ENCODE measurements at regions of chr6 and their contacts with region 1.

Region 1: DNA sequence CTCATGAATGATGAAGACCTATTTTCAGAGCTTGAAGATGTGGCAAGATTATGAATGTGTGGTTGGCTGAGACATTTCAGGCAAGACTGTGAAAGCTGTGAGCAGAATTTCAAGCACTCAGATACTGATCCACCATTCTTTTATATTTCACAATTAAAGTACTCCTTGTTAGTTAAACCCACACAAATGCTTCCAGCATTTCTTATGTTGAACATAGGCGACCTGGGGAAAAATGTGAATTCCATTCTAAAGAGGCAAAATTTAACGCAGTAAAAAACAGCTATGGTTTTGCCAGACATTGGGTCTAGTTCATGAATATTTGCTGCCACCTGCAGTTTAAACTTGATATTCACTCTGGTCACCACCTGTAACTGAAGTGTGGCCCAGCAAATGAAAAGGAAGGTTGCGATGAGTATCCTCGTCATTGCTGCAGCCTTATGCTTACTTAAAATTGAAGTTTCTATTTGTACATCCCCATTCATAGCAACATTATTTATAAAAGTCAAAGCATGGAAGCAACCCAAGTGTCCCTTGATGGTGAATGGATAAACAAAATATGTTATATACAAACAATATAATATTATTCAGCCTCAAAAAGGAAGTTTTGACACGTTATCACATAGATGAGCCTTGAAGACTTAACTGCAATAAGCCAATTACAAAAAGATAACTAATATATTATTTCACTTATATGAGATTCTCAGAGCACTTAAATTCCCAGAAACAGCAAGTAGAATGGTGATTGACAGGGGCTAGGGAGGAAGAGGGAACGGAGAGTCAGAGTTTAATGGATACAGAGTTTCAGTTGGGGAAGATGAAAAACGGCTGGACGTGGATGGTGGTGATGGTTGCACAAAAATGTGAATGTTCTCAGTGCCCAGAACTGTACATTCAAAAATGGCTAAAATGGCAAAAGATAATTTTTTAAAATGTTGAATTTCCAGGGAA is 32.4 kb upstream of the FAM184A start:
- DNase-seq: peak in 1 of 5 donors; percentile 16
- ATAC-seq: peak; percentile 52 to 80 (median 63)
- H3K4me3 ChIP-seq: no peak overlapping the region
- H3K27ac ChIP-seq: no peak overlapping the region
- H3K4me1 ChIP-seq: peaks cover 0 to 6% (median 0%) of the 10 kb centered on the region in 12 donors
- H3K27me3 ChIP-seq: no peaks in the 10 kb centered on the region
- CTCF ChIP-seq: peak; percentile 34 to 78 (median 68)
- POLR2A ChIP-seq: no peak

Region 2: DNA sequence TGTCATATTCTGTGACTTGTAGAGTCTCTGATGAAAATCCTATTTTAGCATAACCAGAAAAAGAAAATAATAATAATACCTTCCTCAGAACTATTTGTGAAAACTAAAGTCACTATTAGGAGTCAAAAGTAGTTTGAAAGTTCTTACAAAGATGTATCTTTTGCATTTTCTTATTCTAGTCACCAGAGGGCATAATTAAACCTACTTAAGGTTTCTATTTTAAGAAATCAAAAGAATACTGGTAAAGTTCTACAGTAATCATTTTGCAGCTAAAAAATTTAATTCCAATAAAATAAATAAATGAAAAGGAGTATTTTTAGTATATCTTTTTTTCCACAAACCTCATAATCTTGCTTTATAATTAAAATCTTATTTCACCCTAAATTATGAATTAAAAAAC is 147.9 kb before region 1 on chr6:
- intact Hi-C with region 1: loop called (anchors 1 to 5 kb)
- DNase-seq: no peak
- ATAC-seq: no peak
- H3K4me3 ChIP-seq: no peak overlapping the region
- H3K27ac ChIP-seq: no peak overlapping the region
- H3K4me1 ChIP-seq: no peaks in the 10 kb centered on the region
- H3K27me3 ChIP-seq: no peaks in the 10 kb centered on the region
- CTCF ChIP-seq: peak in 9 of 12 donors; percentile 9 to 50 (median 39)
- POLR2A ChIP-seq: no peak

Region 3: GRCh38 chr6:118968416-118968815 is 142.5 kb before region 1 on chr6:
- intact Hi-C with region 1: loop called (anchors 1 to 5 kb)
- DNase-seq: no peak
- ATAC-seq: no peak
- H3K4me3 ChIP-seq: no peak overlapping the region
- H3K27ac ChIP-seq: no peak overlapping the region
- H3K4me1 ChIP-seq: no peaks in the 10 kb centered on the region
- H3K27me3 ChIP-seq: no peaks in the 10 kb centered on the region
- CTCF ChIP-seq: peak; percentile 24 to 65 (median 46)
- POLR2A ChIP-seq: no peak

Measured in heart left ventricle (tissue), 16 donors.